Activated naive CD4-positive, alpha-beta T cell treated with anti-CD3 and anti-CD28 coated beads for 36 hours (primary cell): ENCODE measurements at regions of chr6 and their contacts with region 1.

Region 1: DNA sequence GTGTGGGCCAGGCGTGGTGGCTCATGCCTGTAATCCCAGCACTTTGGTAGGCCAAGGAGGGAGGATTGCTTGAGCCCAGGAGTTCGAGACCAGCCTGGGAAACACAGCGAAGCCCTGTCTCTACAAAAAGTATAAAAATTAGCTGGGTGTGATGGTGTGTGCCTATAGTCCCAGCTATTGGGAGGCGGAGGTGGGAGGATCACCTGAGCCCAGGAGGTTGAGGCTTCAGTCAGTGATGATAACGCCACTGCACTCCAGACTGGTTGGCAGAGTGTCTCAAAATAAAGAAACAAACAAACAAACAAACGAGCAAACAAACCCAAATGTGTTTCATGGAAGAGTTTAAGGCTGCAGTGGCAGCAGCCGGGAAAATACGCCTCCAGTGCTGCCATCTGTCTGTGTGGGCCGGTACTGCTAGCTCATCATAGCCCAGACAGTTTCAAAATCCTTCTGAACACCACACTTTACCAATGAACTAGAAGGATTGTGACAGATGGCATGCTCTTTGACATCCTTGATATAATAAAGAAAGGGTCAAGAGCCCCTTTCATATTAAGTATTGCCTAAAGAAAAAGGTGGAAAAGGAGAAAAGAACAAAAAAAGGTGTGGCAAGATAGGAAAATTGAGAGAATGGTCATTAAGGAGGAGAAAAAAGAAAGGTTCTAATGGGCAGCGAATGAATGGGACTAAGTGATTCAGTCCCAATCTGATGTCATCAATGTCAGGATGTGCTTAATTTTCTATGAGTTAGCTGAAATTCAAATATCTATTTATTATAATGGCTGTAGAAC is 298.6 kb downstream of the SYNE1 start:
- DNase-seq: peak; percentile 69
- H3K4me3 Mint-ChIP-seq: no peak overlapping the region
- H3K27ac Mint-ChIP-seq: no peak overlapping the region
- H3K4me1 Mint-ChIP-seq: no peaks in the 10 kb centered on the region
- H3K27me3 Mint-ChIP-seq: no peaks in the 10 kb centered on the region

Region 2: DNA sequence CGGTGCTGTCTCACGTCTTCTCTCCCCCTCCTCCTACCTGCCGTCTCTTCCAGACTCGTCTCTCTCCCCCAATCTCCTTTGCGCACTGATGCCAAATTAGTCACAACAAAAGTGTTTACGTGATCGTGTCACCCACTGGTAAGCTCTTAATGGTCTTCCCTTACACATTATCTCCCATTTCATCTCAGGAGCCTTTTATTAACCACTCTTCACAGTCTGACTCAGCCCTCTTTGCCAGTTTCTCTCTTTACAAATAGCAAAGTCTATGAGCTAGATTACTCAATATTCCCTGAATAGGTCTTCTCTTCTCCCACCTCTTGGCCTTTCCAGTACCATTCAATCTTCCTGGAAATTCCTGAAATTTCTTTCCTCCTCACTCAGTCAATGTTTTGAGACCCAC is 284.1 kb before region 1 on chr6:
- CTCF ChIA-PET with region 1: no interaction called
- intact Hi-C with region 1: no loop called
- DNase-seq: no peak
- H3K4me3 Mint-ChIP-seq: no peak overlapping the region
- H3K27ac Mint-ChIP-seq: no peak overlapping the region
- H3K4me1 Mint-ChIP-seq: peaks cover 7% of the 10 kb centered on the region
- H3K27me3 Mint-ChIP-seq: no peaks in the 10 kb centered on the region

Region 3: GRCh38 chr6:152206072-152206818 is 132.3 kb before region 1 on chr6:
- CTCF ChIA-PET with region 1: no interaction called
- intact Hi-C with region 1: loop called (anchors 1 kb)
- DNase-seq: peak; percentile 66
- H3K4me3 Mint-ChIP-seq: no peak overlapping the region
- H3K27ac Mint-ChIP-seq: no peak overlapping the region
- H3K4me1 Mint-ChIP-seq: peaks cover 6% of the 10 kb centered on the region
- H3K27me3 Mint-ChIP-seq: no peaks in the 10 kb centered on the region

Region 4: GRCh38 chr6:152309648-152310047 is 28.9 kb before region 1 on chr6:
- CTCF ChIA-PET with region 1: interaction called, 13 read pairs
- intact Hi-C with region 1: no loop called
- DNase-seq: peak; percentile 83
- H3K4me3 Mint-ChIP-seq: no peak overlapping the region
- H3K27ac Mint-ChIP-seq: no peak overlapping the region
- H3K4me1 Mint-ChIP-seq: peaks cover 19% of the 10 kb centered on the region
- H3K27me3 Mint-ChIP-seq: no peaks in the 10 kb centered on the region